ENCODE measurements at regions of chr2 and their contacts with region 1.

Region 1: GRCh38 chr2:119753041-119753929 is 6.4 kb upstream of the PTPN4 start:
- DNase-seq: peak; percentile 51
- H3K4me3 Mint-ChIP-seq: no peak overlapping the region
- H3K27ac Mint-ChIP-seq: no peak overlapping the region
- H3K4me1 Mint-ChIP-seq: no peaks in the 10 kb centered on the region
- H3K27me3 Mint-ChIP-seq: peaks cover 15% of the 10 kb centered on the region

Region 2: DNA sequence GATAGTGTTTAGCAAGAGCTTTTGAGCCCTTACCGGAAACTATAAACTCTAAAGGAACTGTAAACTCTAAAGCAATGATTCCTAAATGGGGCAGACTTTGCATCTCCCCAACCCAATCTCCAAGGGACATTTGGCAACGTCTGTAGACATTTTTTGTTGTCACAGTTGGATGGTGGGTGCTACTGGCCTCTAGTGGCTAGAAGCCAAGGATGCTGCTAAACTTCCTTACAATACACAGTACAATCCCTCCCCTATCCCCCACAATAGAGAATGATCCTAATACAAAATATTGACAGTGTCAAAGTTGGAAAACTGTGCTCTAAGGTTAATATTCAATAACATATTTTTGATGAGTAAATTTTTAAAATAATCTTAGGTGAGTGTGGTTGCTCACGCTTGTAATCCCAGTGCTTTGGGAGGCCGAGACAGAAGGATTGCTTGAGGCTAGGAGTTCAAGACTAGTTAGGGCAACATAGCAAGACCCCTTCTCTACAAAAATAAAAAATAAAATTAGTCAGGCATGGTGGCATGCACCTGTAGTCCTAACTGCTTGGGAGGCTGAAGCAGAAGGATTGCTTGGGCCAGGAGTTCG is 73.2 kb after region 1 on chr2:
- CTCF ChIA-PET with region 1: interaction called, 30 read pairs
- DNase-seq: peak; percentile 63
- H3K4me3 Mint-ChIP-seq: no peak overlapping the region
- H3K27ac Mint-ChIP-seq: no peak overlapping the region
- H3K4me1 Mint-ChIP-seq: peaks cover 14% of the 10 kb centered on the region
- H3K27me3 Mint-ChIP-seq: no peaks in the 10 kb centered on the region

Measured in activated naive CD4-positive, alpha-beta T cell treated with anti-CD3 and anti-CD28 coated beads, Interleukin-2, amount 10 ng/mL, durations not matched to agents 7 days and 5 days (primary cell).